Body of pancreas (tissue), 4 donors: ENCODE measurements at regions of chr7 and their contacts with region 1.

Region 1: GRCh38 chr7:74449809-74450397 is 3.8 kb upstream of the GTF2IRD1 start:
- DNase-seq: peak; percentile 61 to 76 (median 69)
- ATAC-seq: no peak
- H3K4me3 ChIP-seq: no peak overlapping the region
- H3K27ac ChIP-seq: no peak overlapping the region
- H3K4me1 ChIP-seq: peaks cover 17% of the 10 kb centered on the region
- H3K27me3 ChIP-seq: no peaks in the 10 kb centered on the region
- CTCF ChIP-seq: peak; percentile 60 to 82 (median 75)
- POLR2A ChIP-seq: no peak

Region 2: GRCh38 chr7:74334030-74334429 is 115.9 kb before region 1 on chr7:
- intact Hi-C with region 1: no loop called
- DNase-seq: peak in 1 of 4 donors; percentile 21
- ATAC-seq: no peak
- H3K4me3 ChIP-seq: no peak overlapping the region
- H3K27ac ChIP-seq: no peak overlapping the region
- H3K4me1 ChIP-seq: no peaks in the 10 kb centered on the region
- H3K27me3 ChIP-seq: no peaks in the 10 kb centered on the region
- CTCF ChIP-seq: no peak
- POLR2A ChIP-seq: no peak

Region 3: DNA sequence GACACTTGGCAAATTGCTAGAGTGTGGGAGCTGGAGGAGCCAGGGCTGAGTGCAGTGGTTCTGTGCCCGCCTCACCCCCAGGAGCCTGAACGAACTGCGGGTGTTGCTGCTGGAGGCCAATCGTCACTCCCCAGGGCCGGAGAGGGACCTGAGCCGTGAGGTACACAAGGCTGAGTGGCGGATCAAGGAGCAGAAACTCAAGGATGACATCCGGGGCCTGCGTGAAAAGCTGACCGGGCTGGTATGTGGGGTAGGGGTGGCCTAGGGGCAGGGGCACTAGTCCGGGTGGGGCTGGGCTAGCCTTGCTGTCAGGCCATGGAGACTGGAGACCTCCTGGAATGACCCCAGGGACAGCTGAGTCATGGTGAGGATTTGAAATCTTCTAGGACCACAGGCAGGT is 52.9 kb before region 1 on chr7:
- intact Hi-C with region 1: no loop called
- DNase-seq: no peak
- ATAC-seq: no peak
- H3K4me3 ChIP-seq: no peak overlapping the region
- H3K27ac ChIP-seq: no peak overlapping the region
- H3K4me1 ChIP-seq: peaks cover 6% of the 10 kb centered on the region
- H3K27me3 ChIP-seq: no peaks in the 10 kb centered on the region
- CTCF ChIP-seq: no peak
- POLR2A ChIP-seq: no peak

Region 4: DNA sequence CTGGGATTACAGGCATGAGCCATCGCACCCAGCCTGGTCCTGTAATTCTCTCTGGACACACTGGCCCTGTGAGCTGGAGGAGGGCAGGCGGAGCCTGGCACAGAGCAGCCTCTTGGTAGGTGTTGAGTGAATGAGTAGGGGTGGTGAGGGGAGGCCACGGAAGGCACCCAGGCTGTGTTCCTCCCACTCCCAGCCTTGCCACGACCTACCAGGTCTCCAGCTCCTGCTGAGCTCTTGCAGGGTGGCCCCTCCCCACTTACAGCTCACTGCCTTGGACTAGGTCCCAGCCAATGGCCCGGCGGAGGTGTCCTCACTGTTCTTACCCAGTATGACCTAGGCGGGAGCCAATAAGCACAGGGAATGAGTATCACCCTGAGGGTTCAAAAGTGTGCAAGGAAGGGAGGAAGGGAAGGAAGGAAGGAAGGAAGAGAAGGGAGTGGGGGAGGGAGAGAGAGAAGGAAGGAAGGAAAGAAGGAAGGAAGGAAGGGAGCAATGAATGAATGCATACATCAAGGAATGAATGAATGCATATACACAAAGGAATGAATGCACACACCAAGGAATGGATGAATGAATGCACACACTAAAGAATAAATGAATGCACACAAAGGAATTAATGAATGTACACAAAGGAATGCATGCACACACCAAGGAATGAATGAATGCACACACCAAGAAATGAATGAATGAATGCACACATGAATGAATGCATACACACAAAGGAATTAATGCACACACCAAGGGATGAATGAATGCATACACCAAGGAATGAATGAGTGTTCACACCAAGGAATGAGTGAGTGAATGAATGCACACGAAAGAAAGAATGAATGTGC is 49.3 kb after region 1 on chr7:
- intact Hi-C with region 1: no loop called
- DNase-seq: no peak
- ATAC-seq: no peak
- H3K4me3 ChIP-seq: no peak overlapping the region
- H3K27ac ChIP-seq: no peak overlapping the region
- H3K4me1 ChIP-seq: peaks cover 29% of the 10 kb centered on the region
- H3K27me3 ChIP-seq: no peaks in the 10 kb centered on the region
- CTCF ChIP-seq: no peak
- POLR2A ChIP-seq: no peak

Region 5: DNA sequence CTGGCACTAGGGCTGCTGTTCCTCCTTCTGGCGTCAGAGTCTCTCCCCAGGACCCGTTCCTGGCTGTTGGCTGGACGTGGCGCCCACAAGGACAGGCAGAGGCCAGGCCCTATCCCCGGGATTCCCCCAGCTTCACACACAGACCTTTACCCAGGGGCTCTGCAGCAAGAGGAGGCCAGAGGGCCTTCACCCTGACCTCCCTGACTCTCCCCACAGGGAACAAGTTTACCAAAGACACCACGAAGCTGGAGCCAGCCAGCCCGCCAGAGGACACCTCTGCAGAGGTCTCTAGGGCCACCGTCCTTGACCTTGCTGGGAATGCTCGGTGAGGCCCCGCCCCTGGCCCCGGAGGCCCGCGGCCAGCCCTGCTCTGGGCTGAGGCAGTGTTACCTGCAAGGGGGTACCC is 86.1 kb after region 1 on chr7:
- intact Hi-C with region 1: loop called (anchors 10 kb)
- DNase-seq: no peak
- ATAC-seq: no peak
- H3K4me3 ChIP-seq: no peak overlapping the region
- H3K27ac ChIP-seq: no peak overlapping the region
- H3K4me1 ChIP-seq: peaks cover 6% of the 10 kb centered on the region
- H3K27me3 ChIP-seq: no peaks in the 10 kb centered on the region
- CTCF ChIP-seq: no peak
- POLR2A ChIP-seq: no peak